T-cell (primary cell): ENCODE measurements at regions of chr2 and their contacts with region 1.

Region 1: DNA sequence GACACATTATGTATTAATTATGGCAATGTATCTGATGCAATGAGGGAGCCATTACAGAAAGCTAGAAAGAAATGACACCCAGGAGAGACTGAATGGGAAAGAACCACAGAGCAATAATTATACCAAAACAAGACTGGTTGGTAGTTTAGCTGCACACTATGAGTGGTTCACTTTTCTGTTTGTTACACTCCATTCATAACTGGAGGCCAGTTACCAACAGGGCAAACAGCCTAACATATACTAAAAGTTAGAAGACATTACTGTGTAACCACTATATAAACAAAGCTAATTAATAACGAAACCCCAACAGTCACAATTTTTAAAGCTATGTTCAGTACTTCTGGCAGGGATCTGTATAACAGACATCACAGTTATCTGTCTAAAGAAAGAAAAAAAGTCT is 49.4 kb downstream of the NBAS start:
- DNase-seq: no peak
- ATAC-seq: no peak
- H3K4me3 ChIP-seq: no peak overlapping the region
- H3K4me3 Mint-ChIP-seq: no peak overlapping the region
- H3K27ac ChIP-seq: no peak overlapping the region
- H3K27ac Mint-ChIP-seq: no peak overlapping the region
- H3K4me1 ChIP-seq: no peaks in the 10 kb centered on the region
- H3K4me1 Mint-ChIP-seq: peaks cover 1 to 8% (median 2%) of the 10 kb centered on the region in 3 donors
- H3K27me3 ChIP-seq: no peaks in the 10 kb centered on the region
- H3K27me3 Mint-ChIP-seq: no peaks in the 10 kb centered on the region

Region 2: GRCh38 chr2:15313657-15314056 is 198.0 kb before region 1 on chr2:
- CTCF ChIA-PET with region 1: no interaction called
- POLR2A ChIA-PET with region 1: no interaction called
- DNase-seq: no peak
- ATAC-seq: peak in 1 of 4 experiments; percentile 12
- H3K4me3 ChIP-seq: no peak overlapping the region
- H3K4me3 Mint-ChIP-seq: no peak overlapping the region
- H3K27ac ChIP-seq: no peak overlapping the region
- H3K27ac Mint-ChIP-seq: no peak overlapping the region
- H3K4me1 ChIP-seq: peaks cover 7 to 23% of the 10 kb centered on the region in 2 experiments
- H3K4me1 Mint-ChIP-seq: peaks cover 45 to 59% (median 48%) of the 10 kb centered on the region in 3 donors
- H3K27me3 ChIP-seq: no peaks in the 10 kb centered on the region
- H3K27me3 Mint-ChIP-seq: no peaks in the 10 kb centered on the region

Region 3: GRCh38 chr2:15492773-15493325 is 18.8 kb before region 1 on chr2:
- CTCF ChIA-PET with region 1: interaction called in 1 of 2 experiments, 14 read pairs
- POLR2A ChIA-PET with region 1: no interaction called
- DNase-seq: no peak
- ATAC-seq: no peak
- H3K4me3 ChIP-seq: no peak overlapping the region
- H3K4me3 Mint-ChIP-seq: no peak overlapping the region
- H3K27ac ChIP-seq: no peak overlapping the region
- H3K27ac Mint-ChIP-seq: no peak overlapping the region
- H3K4me1 ChIP-seq: no peaks in the 10 kb centered on the region
- H3K4me1 Mint-ChIP-seq: no peaks in the 10 kb centered on the region
- H3K27me3 ChIP-seq: no peaks in the 10 kb centered on the region
- H3K27me3 Mint-ChIP-seq: no peaks in the 10 kb centered on the region